Breast epithelium (tissue), 4 donors: ENCODE measurements at regions of chr20 and their contacts with region 1.

Region 1: DNA sequence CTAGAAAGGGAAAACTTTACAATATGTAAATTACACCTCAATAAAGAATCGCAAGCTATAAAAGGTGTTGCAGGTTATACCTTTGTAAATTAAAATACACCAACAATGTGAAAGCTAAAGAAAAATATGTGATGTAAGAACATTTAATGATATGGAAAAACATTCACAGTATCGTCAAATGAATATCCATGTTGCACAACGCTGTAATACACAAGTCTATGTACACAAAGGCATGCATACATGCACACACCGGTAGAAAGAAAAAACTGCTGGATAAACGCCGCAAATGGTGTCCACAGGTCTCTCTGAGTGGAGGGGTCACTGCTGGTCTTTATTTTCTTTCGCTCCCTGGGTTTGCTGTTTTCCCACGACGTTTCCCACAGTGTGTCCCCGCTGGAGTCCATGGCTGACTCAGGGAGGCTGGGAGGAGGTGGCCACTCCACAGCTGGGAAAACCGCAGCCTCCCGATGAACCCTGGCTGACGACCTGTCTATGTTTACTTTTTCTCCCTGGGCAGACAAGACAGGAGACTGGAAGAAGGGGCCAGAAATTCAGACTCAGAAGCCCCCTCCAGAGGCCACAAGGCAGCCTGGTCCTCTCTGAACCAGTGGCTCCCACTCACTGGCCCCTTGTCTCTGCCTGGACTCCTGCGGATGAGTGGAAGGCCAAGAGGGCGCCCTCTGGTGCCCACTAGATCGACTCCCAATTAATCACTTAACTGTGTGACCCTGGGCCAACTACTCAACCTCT is 12.9 kb upstream of the BPI start:
- DNase-seq: no peak
- H3K4me3 ChIP-seq: peak overlapping the region in 1 of 3 donors; percentile 8
- H3K27ac ChIP-seq: peak overlapping the region in 1 of 2 donors; percentile 32
- H3K4me1 ChIP-seq: no peaks in the 10 kb centered on the region
- H3K27me3 ChIP-seq: no peaks in the 10 kb centered on the region
- CTCF ChIP-seq: no peak
- POLR2A ChIP-seq: no peak

Region 2: GRCh38 chr20:37226889-37227288 is 1064.1 kb before region 1 on chr20:
- intact Hi-C with region 1: no loop called
- DNase-seq: no peak
- H3K4me3 ChIP-seq: no peak overlapping the region
- H3K27ac ChIP-seq: no peak overlapping the region
- H3K4me1 ChIP-seq: no peaks in the 10 kb centered on the region
- H3K27me3 ChIP-seq: no peaks in the 10 kb centered on the region
- CTCF ChIP-seq: no peak
- POLR2A ChIP-seq: no peak

Region 3: GRCh38 chr20:38229376-38230252 is 61.4 kb before region 1 on chr20:
- intact Hi-C with region 1: loop called (anchors 10 kb)
- DNase-seq: no peak
- H3K4me3 ChIP-seq: no peak overlapping the region
- H3K27ac ChIP-seq: no peak overlapping the region
- H3K4me1 ChIP-seq: no peaks in the 10 kb centered on the region
- H3K27me3 ChIP-seq: no peaks in the 10 kb centered on the region
- CTCF ChIP-seq: peak in 2 of 3 donors; percentile 28 to 53
- POLR2A ChIP-seq: no peak